Activated CD4-positive, alpha-beta memory T cell treated with anti-CD3 and anti-CD28 coated beads for 36 hours (primary cell): ENCODE measurements at regions of chr13 and their contacts with region 1.

Region 1: GRCh38 chr13:97432917-97433726 is 847 bp upstream of the RAP2A start:
- DNase-seq: peak; percentile 99
- H3K4me3 Mint-ChIP-seq: peak overlapping the region; percentile 95
- H3K27ac Mint-ChIP-seq: peak overlapping the region; percentile 99
- H3K4me1 Mint-ChIP-seq: peaks cover 22% of the 10 kb centered on the region
- H3K27me3 Mint-ChIP-seq: peaks cover 3% of the 10 kb centered on the region

Region 2: GRCh38 chr13:97124916-97125809 is 308.0 kb before region 1 on chr13:
- CTCF ChIA-PET with region 1: no interaction called
- POLR2A ChIA-PET with region 1: no interaction called
- intact Hi-C with region 1: loop called (anchors 1 kb)
- DNase-seq: peak; percentile 74
- H3K4me3 Mint-ChIP-seq: no peak overlapping the region
- H3K27ac Mint-ChIP-seq: peak overlapping the region; percentile 7
- H3K4me1 Mint-ChIP-seq: peaks cover 34% of the 10 kb centered on the region
- H3K27me3 Mint-ChIP-seq: peaks cover 41% of the 10 kb centered on the region

Region 3: DNA sequence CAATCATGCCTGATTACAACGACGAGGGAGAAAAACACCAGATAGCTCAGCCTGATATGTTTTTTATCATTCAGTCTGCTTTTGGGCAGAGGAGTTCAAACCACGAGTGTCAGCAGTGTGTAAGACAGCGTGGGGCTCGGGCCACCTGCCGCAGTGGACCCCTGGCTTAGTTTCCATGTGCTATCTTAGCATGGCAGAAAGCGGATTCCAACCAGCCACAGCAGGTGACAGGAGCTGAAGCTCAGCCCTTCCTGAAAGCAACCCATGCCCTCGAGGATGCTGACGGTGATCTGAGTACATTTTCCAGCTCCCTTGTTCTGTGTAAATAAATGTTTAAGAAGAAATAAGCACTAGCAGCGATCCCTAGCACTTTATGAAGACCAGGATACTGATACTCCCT is 243.2 kb before region 1 on chr13:
- CTCF ChIA-PET with region 1: no interaction called
- POLR2A ChIA-PET with region 1: no interaction called
- intact Hi-C with region 1: no loop called
- DNase-seq: no peak
- H3K4me3 Mint-ChIP-seq: no peak overlapping the region
- H3K27ac Mint-ChIP-seq: no peak overlapping the region
- H3K4me1 Mint-ChIP-seq: peaks cover 5% of the 10 kb centered on the region
- H3K27me3 Mint-ChIP-seq: peaks cover 2% of the 10 kb centered on the region

Region 4: GRCh38 chr13:97295283-97296182 is 137.6 kb before region 1 on chr13:
- CTCF ChIA-PET with region 1: no interaction called
- POLR2A ChIA-PET with region 1: interaction called, 3 read pairs
- intact Hi-C with region 1: loop called (anchors 1 kb)
- DNase-seq: no peak
- H3K4me3 Mint-ChIP-seq: no peak overlapping the region
- H3K27ac Mint-ChIP-seq: no peak overlapping the region
- H3K4me1 Mint-ChIP-seq: peaks cover 46% of the 10 kb centered on the region
- H3K27me3 Mint-ChIP-seq: no peaks in the 10 kb centered on the region

Region 5: DNA sequence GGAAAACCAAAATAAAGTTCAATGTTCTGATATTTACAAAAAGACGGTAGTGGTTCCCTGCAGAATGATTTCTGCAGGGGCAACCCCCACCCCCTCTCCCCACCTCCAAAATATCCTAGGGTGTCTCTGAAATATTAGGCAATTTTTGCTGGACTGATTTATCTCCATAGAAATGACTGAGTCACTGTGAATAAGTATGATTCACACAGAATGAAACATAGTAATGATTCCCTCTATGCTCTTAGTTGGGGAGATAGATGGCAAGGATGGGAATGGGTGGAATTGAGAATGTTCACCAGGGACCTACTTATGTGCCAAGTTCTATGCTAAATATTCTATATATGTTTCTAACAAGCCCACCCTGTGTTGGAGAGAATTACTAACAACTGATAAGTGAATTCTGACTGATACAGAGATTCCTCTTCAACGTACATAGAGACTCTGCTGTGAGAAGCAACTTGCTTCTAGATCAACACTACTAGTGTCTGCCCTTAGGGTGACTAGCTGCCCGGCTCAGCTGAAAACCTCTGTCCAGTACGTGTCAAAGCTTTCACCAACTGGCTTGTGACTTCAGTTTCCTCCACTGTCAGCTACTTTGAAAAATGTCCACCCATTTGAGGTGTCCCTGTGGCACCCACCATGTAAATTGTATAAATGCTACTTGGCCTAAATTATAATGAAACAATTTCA is 37.5 kb before region 1 on chr13:
- CTCF ChIA-PET with region 1: no interaction called
- POLR2A ChIA-PET with region 1: no interaction called
- intact Hi-C with region 1: no loop called
- DNase-seq: no peak
- H3K4me3 Mint-ChIP-seq: no peak overlapping the region
- H3K27ac Mint-ChIP-seq: no peak overlapping the region
- H3K4me1 Mint-ChIP-seq: no peaks in the 10 kb centered on the region
- H3K27me3 Mint-ChIP-seq: no peaks in the 10 kb centered on the region

Region 6: GRCh38 chr13:97539651-97540610 is 106.8 kb after region 1 on chr13:
- CTCF ChIA-PET with region 1: no interaction called
- POLR2A ChIA-PET with region 1: no interaction called
- intact Hi-C with region 1: loop called (anchors 2 kb)
- DNase-seq: no peak
- H3K4me3 Mint-ChIP-seq: no peak overlapping the region
- H3K27ac Mint-ChIP-seq: no peak overlapping the region
- H3K4me1 Mint-ChIP-seq: peaks cover 7% of the 10 kb centered on the region
- H3K27me3 Mint-ChIP-seq: peaks cover 8% of the 10 kb centered on the region

Region 7: DNA sequence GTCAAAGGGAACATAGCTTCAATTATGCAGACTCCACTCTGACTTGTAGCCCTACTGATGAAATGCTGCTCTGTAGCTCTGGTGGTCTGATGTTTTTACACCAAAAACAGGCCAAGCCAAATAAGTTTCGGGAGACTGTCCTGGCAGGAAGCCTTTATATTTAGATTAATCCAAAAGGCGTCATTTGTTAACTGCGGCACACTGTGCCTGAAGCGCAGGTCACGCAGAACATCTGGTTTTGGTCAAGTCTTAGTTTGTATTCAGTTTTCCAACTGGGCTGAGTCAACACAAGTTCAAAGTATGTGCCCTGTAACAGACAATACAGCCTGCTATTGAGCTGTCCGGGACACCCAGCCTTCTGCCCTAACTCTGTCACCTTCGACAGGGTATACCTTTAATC is 365.7 kb after region 1 on chr13:
- CTCF ChIA-PET with region 1: no interaction called
- POLR2A ChIA-PET with region 1: no interaction called
- intact Hi-C with region 1: no loop called
- DNase-seq: no peak
- H3K4me3 Mint-ChIP-seq: no peak overlapping the region
- H3K27ac Mint-ChIP-seq: no peak overlapping the region
- H3K4me1 Mint-ChIP-seq: no peaks in the 10 kb centered on the region
- H3K27me3 Mint-ChIP-seq: peaks cover 12% of the 10 kb centered on the region

Region 8: DNA sequence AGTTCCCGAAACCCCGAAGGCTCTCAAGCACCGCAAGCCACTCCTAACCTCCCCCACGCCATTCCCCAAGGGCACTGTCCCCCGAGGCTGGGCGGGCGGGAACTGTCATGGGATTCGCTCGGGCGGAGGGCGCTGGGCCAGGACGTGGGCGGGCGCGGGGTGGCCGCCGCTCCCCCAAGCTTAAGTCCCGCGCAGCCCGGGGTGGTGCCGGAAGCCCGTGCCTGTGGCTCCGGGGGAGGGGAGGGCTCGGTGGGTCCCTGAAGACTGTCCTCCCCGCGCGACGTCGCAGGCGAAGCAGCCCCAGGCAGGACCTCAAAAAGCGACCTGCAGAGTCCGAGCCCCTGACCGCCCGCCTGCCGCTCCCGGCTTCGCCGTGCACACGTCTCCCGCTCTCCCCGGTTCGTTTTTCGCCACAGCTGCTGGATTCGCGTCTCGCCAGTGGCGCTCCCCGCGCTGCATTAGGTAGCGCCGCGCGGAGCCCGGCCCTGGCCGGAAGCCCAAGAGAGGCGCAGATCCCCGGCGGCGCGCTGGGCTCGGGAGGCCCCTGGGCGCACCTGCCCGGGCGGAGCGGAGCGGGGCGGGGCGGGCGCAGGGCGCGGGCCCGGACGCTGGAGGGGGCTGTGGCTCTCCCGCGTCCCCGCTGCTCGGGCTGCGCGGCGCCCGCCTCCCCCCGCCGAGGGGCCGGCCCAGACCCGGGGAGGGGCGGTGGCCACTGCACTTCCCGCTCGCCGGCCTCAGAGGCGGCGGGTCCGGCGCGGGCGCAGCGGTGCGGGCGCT is 709.4 kb after region 1 on chr13 and contains the start of gene FARP1:
- CTCF ChIA-PET with region 1: no interaction called
- POLR2A ChIA-PET with region 1: no interaction called
- intact Hi-C with region 1: loop called (anchors 10 kb)
- DNase-seq: peak; percentile 62
- H3K4me3 Mint-ChIP-seq: peak within 1 kb of the TSS; percentile 61
- H3K27ac Mint-ChIP-seq: no peak within 1 kb of the TSS
- H3K4me1 Mint-ChIP-seq: peaks cover 5% of the 10 kb centered on the region
- H3K27me3 Mint-ChIP-seq: peaks cover 51% of the 10 kb centered on the region
- total RNA-seq, gene FARP1: 0.56 to 0.64 TPM